Mammary epithelial cell (primary cell): ENCODE measurements at regions of chr17 and their contacts with region 1.

Region 1: DNA sequence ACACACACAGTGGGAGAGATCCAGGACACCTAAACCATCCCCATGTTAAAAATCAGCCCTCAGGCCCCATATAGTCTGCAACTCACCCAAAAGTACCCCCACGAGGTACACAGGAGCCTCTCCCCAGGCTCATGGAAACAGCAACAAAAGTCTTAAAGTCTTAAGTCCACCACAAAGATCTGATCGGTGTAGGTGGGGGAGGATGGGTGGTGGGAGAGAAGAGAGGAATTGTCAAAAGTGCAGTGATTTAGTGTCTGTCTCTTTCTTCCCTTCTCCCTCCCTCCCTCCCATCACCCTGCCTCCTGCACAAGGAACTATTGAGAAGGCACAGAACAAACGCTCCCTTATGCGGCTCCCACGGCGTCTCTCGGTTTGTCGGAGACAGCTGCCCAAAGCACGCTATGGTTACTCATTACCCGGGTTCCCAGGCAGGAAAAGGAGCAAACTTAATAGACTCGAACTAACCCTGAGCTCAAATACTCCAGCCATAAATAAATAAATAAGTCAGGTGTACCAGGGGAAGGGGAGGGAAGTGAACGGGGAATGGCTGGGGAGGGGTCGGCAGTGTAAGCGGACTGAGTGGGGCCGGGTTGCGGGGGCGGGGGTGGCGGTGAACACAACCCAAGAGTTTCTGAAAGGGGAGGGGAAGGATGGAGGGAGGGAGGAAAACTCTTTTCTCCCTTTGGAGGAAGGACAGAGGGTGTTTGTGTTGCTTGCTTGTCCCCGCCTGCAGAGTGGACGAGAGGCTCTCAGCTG is 477.4 kb downstream of the SLC39A11 start:
- DNase-seq: peak; percentile 94
- H3K4me3 ChIP-seq: no peak overlapping the region
- H3K27ac ChIP-seq: peak overlapping the region; percentile 97
- H3K4me1 ChIP-seq: peaks cover 32% of the 10 kb centered on the region
- H3K27me3 ChIP-seq: no peaks in the 10 kb centered on the region
- CTCF ChIP-seq: no peak

Region 2: GRCh38 chr17:72715906-72716572 is 101.0 kb after region 1 on chr17:
- CTCF ChIA-PET with region 1: no interaction called
- dilution Hi-C with region 1: no loop called
- in situ Hi-C with region 1: no loop called
- intact Hi-C with region 1: loop called (anchors 5 kb)
- DNase-seq: peak; percentile 96
- H3K4me3 ChIP-seq: no peak overlapping the region
- H3K27ac ChIP-seq: peak overlapping the region; percentile 87
- H3K4me1 ChIP-seq: peaks cover 25% of the 10 kb centered on the region
- H3K27me3 ChIP-seq: no peaks in the 10 kb centered on the region
- CTCF ChIP-seq: no peak